ENCODE measurements at regions of chr7 and their contacts with region 1.

Region 1: DNA sequence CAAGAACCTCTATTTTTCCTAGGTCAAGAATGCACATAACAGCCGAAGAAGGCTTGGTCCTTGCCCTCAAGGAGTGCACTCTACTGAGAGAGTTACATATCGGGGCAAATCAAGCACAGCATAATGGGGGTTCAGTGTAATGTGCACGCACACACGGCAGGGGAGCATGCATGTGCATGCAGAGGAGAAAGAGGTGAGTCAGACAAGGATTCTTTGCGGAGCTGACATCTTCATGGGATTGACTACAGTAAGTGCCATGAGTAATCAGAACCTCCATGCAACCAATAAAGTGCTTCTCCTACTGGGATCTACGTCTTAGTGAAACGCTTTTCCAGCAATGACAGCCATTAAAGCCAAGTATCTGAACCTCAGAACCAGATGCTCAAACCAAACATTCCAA is 123.6 kb downstream of the RNF216 start:
- DNase-seq: no peak
- H3K4me3 ChIP-seq: no peak overlapping the region
- H3K27ac ChIP-seq: no peak overlapping the region
- H3K4me1 ChIP-seq: peaks cover 16% of the 10 kb centered on the region
- H3K27me3 ChIP-seq: no peaks in the 10 kb centered on the region
- CTCF ChIP-seq: no peak
- POLR2A ChIP-seq: no peak

Region 2: DNA sequence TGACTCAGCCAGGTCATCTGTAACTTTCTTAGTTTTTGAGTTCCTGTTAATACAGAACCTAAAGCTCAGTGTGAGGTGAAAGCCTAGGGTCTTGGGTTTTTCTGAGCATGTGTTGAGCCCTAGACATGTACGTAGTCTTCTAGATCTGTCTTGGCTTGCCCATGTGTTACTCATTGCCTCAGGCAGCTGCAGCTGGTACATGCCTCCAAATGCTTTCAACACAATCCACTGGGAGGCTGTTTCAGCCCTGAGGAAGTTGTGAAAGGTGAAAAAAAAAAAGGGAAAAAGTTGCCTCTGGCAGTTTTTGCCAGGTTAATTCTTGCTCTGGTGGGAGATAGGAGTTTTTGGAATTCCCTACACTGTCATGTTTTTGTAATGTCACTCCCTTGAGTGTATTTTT is 11.0 kb before region 1 on chr7:
- CTCF ChIA-PET with region 1: interaction called, 4 read pairs
- POLR2A ChIA-PET with region 1: no interaction called
- dilution Hi-C with region 1: no loop called
- intact Hi-C with region 1: loop called (anchors 1 kb)
- DNase-seq: no peak
- H3K4me3 ChIP-seq: no peak overlapping the region
- H3K27ac ChIP-seq: no peak overlapping the region
- H3K4me1 ChIP-seq: peaks cover 25% of the 10 kb centered on the region
- H3K27me3 ChIP-seq: no peaks in the 10 kb centered on the region
- CTCF ChIP-seq: no peak
- POLR2A ChIP-seq: no peak

Measured in endothelial cell of umbilical vein (primary cell).